HAP-1 (cell line): ENCODE measurements at regions of chr15 and their contacts with region 1.

Region 1: GRCh38 chr15:83960192-83960829 is 275.3 kb upstream of the GOLGA6L4 start:
- DNase-seq: no peak
- H3K4me3 ChIP-seq: no peak overlapping the region
- H3K4me1 ChIP-seq: no peaks in the 10 kb centered on the region
- H3K27me3 ChIP-seq: no peaks in the 10 kb centered on the region

Region 2: DNA sequence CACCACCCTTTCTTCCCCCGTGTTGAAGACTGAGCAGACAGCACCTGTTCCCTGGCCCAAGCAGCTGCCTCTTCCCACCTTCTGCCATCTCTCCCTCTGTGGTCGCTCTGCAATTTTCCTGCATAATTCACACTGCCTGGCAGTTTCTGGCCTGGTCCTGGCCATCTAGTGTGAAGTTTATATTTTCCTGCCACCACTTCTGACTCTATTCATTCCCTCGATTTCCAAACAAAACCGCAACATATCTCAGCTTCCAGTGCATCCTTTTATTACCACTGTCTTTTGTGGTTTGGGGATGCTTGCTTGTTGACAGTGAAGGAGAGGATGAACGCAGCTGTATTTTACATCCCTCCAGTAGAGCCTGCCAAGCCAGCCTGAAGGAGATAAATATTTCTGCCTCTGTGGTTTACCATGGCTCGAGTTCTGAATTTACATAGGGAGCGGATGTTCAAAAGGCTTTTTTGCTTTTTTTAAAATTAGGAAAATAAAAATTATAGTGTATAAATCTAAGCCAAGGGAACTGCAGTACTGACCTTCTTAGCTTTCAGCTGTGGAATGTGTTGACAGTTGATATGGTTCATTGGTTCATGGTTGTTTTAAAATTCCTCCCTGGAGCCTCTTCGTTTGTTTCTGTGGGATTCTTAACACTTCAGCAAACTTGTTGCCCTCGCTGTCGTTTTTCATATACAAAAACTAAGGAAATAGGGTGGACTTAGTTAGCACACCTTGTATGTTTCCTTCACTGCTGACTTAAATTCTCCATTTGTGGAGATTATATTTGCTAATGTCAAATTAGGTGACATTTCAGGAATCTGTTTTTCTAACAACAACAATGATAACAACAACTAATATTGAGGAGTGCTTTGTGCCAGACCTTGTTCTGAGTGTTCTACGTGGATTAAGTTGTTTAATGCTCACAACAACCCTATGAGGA is 55.9 kb before region 1 on chr15:
- in situ Hi-C with region 1: loop called (anchors 10 kb)
- DNase-seq: no peak
- H3K4me3 ChIP-seq: no peak overlapping the region
- H3K4me1 ChIP-seq: no peaks in the 10 kb centered on the region
- H3K27me3 ChIP-seq: no peaks in the 10 kb centered on the region